OCI-LY7 (cell line): ENCODE measurements at regions of chr20 and their contacts with region 1.

Region 1: GRCh38 chr20:15937179-15937578 is 636.1 kb downstream of the KIF16B start:
- DNase-seq: peak; percentile 60
- H3K4me3 ChIP-seq: no peak overlapping the region
- H3K27ac ChIP-seq: peak overlapping the region; percentile 30
- H3K4me1 ChIP-seq: peaks cover 13% of the 10 kb centered on the region
- CTCF ChIP-seq: no peak

Region 2: GRCh38 chr20:15643714-15644113 is 293.5 kb before region 1 on chr20:
- CTCF ChIA-PET with region 1: no interaction called
- POLR2A ChIA-PET with region 1: no interaction called
- intact Hi-C with region 1: no loop called
- DNase-seq: peak; percentile 18
- H3K4me3 ChIP-seq: no peak overlapping the region
- H3K27ac ChIP-seq: no peak overlapping the region
- H3K4me1 ChIP-seq: no peaks in the 10 kb centered on the region
- CTCF ChIP-seq: peak; percentile 68

Region 3: DNA sequence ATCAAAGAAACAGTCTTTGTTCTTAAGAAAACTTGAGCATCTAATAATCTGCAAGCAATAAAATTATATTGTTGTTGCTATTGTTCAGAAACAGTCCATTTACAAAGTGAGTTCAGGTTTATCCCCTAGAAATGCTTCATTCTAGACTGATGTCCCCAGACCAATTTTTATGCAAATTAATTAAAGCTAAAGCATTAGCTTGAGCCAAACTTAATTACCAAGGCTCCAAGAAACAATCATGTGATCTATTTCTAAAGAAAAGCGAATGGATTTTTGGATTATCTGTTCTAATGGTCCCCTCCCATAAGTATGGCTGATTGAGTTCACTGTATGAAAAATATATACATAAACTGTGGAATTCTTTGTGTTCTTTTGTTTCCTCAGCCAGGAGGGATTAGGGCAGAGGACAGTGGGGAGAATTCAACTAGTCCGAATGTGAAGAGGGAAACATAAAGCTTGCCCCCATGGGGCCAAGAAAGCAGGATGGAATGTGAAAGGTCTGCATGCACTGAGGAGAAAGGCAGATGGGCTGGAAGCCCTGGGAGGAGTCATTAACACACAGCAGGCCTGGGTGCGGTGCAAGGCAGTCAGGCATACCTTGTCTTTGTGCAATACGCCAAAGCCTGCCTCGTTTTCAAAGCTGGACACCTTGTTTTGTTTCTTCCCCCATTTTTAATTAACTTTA is 39.0 kb after region 1 on chr20:
- CTCF ChIA-PET with region 1: no interaction called
- POLR2A ChIA-PET with region 1: no interaction called
- intact Hi-C with region 1: loop called (anchors 1 kb)
- DNase-seq: no peak
- H3K4me3 ChIP-seq: no peak overlapping the region
- H3K27ac ChIP-seq: no peak overlapping the region
- H3K4me1 ChIP-seq: no peaks in the 10 kb centered on the region
- CTCF ChIP-seq: no peak

Region 4: GRCh38 chr20:16158090-16158975 is 221.2 kb after region 1 on chr20:
- CTCF ChIA-PET with region 1: no interaction called
- POLR2A ChIA-PET with region 1: no interaction called
- intact Hi-C with region 1: loop called (anchors 2 kb)
- DNase-seq: peak; percentile 60
- H3K4me3 ChIP-seq: peak overlapping the region; percentile 39
- H3K27ac ChIP-seq: peak overlapping the region; percentile 74
- H3K4me1 ChIP-seq: peaks cover 22% of the 10 kb centered on the region
- CTCF ChIP-seq: no peak